CD4-positive, alpha-beta T cell (primary cell): ENCODE measurements at regions of chrX and their contacts with region 1.

Region 1: GRCh38 chrX:40392599-40392998 is 188.2 kb upstream of the ATP6AP2 start:
- DNase-seq: no peak
- ATAC-seq: no peak
- H3K4me3 ChIP-seq: no peak overlapping the region
- H3K4me3 Mint-ChIP-seq: no peak overlapping the region
- H3K27ac ChIP-seq: no peak overlapping the region
- H3K27ac Mint-ChIP-seq: no peak overlapping the region
- H3K4me1 ChIP-seq: no peaks in the 10 kb centered on the region
- H3K4me1 Mint-ChIP-seq: no peaks in the 10 kb centered on the region
- H3K27me3 ChIP-seq: no peaks in the 10 kb centered on the region
- H3K27me3 Mint-ChIP-seq: no peaks in the 10 kb centered on the region
- CTCF ChIP-seq: no peak

Region 2: GRCh38 chrX:38999967-39000745 is 1392.4 kb before region 1 on chrX:
- CTCF ChIA-PET with region 1: no interaction called
- POLR2A ChIA-PET with region 1: no interaction called
- intact Hi-C with region 1: no loop called
- DNase-seq: no peak
- ATAC-seq: no peak
- H3K4me3 ChIP-seq: no peak overlapping the region
- H3K4me3 Mint-ChIP-seq: no peak overlapping the region
- H3K27ac ChIP-seq: no peak overlapping the region
- H3K27ac Mint-ChIP-seq: no peak overlapping the region
- H3K4me1 ChIP-seq: no peaks in the 10 kb centered on the region
- H3K4me1 Mint-ChIP-seq: no peaks in the 10 kb centered on the region
- H3K27me3 ChIP-seq: no peaks in the 10 kb centered on the region
- H3K27me3 Mint-ChIP-seq: no peaks in the 10 kb centered on the region
- CTCF ChIP-seq: no peak

Region 3: DNA sequence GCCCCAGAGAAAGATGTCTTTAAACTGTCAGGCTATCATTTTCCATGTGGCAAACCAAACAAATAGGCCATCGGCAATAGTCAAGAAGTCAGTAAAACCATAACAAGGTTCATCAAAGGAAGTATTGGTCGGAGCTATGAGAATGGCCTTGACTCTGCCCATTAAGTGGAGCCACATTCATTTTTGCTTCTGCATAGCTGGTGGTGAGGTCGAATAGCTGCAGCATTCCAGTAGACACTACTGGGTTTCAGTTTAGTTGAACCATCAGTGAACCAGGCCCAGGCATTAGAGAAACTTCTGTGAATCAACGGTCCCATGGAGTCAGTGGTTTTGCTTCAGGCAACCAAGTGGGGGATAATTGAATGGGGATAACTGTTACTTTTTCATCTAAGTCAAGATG is 434.7 kb after region 1 on chrX:
- CTCF ChIA-PET with region 1: no interaction called
- POLR2A ChIA-PET with region 1: no interaction called
- intact Hi-C with region 1: loop called in 1 of 2 experiments (anchors 5 kb)
- DNase-seq: no peak
- ATAC-seq: no peak
- H3K4me3 ChIP-seq: no peak overlapping the region
- H3K4me3 Mint-ChIP-seq: no peak overlapping the region
- H3K27ac ChIP-seq: no peak overlapping the region
- H3K27ac Mint-ChIP-seq: no peak overlapping the region
- H3K4me1 ChIP-seq: no peaks in the 10 kb centered on the region
- H3K4me1 Mint-ChIP-seq: no peaks in the 10 kb centered on the region
- H3K27me3 ChIP-seq: no peaks in the 10 kb centered on the region
- H3K27me3 Mint-ChIP-seq: no peaks in the 10 kb centered on the region
- CTCF ChIP-seq: no peak